PC-9 (cell line): ENCODE measurements at regions of chr1 and their contacts with region 1.

Region 1: DNA sequence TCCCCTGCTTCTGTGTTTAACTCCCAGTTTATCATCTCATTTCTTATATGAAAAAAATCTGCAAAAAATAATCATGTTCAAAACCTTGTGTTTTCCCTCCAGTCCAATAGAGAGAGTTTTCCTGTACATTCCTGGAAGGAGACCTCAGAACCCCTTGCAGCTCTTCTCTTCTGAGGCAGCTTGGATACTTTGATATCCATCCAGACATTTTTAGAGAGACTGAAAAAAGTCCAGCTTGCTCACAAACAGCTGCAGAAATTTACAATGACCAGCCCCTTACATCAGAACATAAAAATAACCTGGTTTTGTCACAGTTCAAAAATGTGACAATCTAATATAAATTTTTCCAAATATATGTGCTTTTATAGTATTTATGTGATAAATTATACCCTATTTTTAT is 73.3 kb upstream of the C1orf115 start:
- DNase-seq: no peak
- H3K4me3 ChIP-seq: no peak overlapping the region
- H3K27ac ChIP-seq: no peak overlapping the region
- H3K4me1 ChIP-seq: no peaks in the 10 kb centered on the region
- H3K27me3 ChIP-seq: no peaks in the 10 kb centered on the region
- CTCF ChIP-seq: no peak

Region 2: GRCh38 chr1:220451541-220451940 is 165.3 kb before region 1 on chr1:
- CTCF ChIA-PET with region 1: no interaction called
- POLR2A ChIA-PET with region 1: interaction called, 11 read pairs
- intact Hi-C with region 1: no loop called
- DNase-seq: peak in 1 of 2 experiments; percentile 71
- H3K4me3 ChIP-seq: no peak overlapping the region
- H3K27ac ChIP-seq: no peak overlapping the region
- H3K4me1 ChIP-seq: peaks cover 14% of the 10 kb centered on the region
- H3K27me3 ChIP-seq: no peaks in the 10 kb centered on the region
- CTCF ChIP-seq: no peak

Region 3: DNA sequence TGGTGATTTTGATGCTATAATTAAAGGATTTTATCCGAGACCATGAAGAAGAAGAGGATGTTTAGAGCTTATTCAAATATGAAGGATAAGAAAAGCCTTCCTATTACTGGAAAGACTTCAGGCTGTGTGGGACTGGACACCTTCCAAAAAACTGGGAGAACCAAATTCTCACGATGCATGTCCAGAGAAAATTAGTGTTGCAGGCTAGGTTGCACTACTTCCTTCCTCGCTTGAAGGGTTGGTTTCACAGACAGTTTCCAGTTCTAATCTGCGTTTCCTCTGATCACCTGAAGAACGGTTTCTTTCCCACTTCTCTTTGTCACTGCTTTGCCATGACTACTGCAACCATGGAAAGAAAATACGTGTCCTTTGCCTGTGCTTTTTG is 133.3 kb after region 1 on chr1:
- CTCF ChIA-PET with region 1: no interaction called
- POLR2A ChIA-PET with region 1: no interaction called
- intact Hi-C with region 1: no loop called
- DNase-seq: no peak
- H3K4me3 ChIP-seq: no peak overlapping the region
- H3K27ac ChIP-seq: no peak overlapping the region
- H3K4me1 ChIP-seq: peaks cover 24% of the 10 kb centered on the region
- H3K27me3 ChIP-seq: no peaks in the 10 kb centered on the region
- CTCF ChIP-seq: no peak

Region 4: DNA sequence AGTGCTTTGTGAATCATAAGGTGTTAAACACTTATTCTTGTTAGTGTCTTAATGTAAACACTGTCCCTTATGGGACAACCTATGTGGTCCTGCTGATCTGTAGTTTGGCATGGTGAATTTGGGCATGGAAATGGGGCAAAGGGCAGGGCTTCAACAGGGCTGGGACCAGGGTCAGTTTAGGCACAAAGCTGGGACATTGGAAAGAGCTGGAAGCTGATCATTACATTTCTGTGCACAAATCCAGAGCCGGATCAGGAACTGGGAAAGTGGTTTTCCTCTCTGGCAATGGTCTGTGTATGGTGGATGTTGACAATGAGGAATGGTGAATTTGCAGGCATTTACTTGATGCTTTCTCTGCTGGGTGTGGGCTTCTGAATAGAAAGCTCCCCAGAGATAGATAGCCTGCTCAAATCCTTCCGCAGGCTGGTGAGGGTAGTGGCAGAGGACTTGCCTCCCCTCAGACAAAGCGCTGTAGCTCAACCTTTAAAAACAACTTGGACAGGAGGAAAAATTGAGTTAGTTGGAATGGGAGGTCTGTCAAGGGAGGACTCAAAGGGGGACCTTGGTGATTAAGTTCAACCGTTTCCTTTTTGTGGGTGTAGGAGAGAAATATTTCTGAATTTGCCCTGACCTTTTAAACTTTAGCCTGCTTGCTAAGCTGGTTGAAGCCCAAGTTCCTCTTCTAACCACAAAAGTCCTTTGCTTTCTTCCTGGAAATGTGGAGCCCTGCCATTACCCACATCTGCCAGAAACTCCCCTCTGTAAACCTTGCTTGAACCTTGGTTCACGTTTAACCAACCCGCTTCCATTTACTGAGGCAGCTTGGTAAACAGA is 297.7 kb after region 1 on chr1:
- CTCF ChIA-PET with region 1: no interaction called
- POLR2A ChIA-PET with region 1: no interaction called
- intact Hi-C with region 1: no loop called
- DNase-seq: no peak
- H3K4me3 ChIP-seq: no peak overlapping the region
- H3K27ac ChIP-seq: no peak overlapping the region
- H3K4me1 ChIP-seq: no peaks in the 10 kb centered on the region
- H3K27me3 ChIP-seq: no peaks in the 10 kb centered on the region
- CTCF ChIP-seq: no peak